Activated CD4-positive, alpha-beta T cell treated with anti-CD3 and anti-CD28 coated beads, Interleukin-2, amount 10 ng/mL, durations not matched to agents 7 days and 5 days (primary cell): ENCODE measurements at regions of chr2 and their contacts with region 1.

Region 1: GRCh38 chr2:120245354-120245791 is 7.3 kb upstream of the RALB start:
- DNase-seq: no peak
- H3K4me3 Mint-ChIP-seq: no peak overlapping the region
- H3K27ac Mint-ChIP-seq: no peak overlapping the region
- H3K4me1 Mint-ChIP-seq: peaks cover 25% of the 10 kb centered on the region
- H3K27me3 Mint-ChIP-seq: peaks cover 21% of the 10 kb centered on the region

Region 2: DNA sequence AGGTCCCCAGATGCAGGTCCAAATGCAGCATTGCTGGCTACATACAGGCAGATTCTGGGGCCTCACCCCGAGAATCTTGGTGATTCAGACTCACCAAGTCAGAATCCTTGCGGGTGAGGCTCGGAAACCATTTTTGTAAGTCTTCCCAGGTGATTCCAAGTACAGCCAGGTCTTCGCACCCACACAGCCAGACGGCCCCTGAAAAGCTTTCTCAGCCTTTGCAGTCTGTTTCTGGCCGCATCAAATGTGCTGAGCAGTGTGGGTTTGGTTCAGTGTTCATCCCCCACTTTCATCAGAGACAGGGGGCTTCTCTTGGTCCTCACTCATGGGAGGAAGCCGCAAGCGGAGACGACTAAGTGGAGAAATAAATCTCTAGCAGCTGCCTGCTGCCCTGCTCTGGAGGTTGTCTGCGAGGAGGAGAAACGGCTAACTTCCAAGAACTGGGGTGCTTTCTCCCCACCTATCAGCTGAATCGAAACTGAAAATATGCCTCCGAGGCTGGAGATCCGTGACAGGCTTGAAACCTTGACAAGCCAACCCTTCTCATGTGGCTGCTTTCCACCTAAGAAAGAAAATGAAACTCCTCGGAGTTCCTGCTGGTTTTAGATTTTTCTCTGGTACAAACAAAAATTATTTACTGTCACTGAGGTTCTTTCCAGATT is 13.3 kb before region 1 on chr2:
- CTCF ChIA-PET with region 1: interaction called, 51 read pairs
- POLR2A ChIA-PET with region 1: interaction called, 5 read pairs
- DNase-seq: peak; percentile 90
- H3K4me3 Mint-ChIP-seq: peak overlapping the region; percentile 96
- H3K27ac Mint-ChIP-seq: peak overlapping the region; percentile 99
- H3K4me1 Mint-ChIP-seq: peaks cover 53% of the 10 kb centered on the region
- H3K27me3 Mint-ChIP-seq: no peaks in the 10 kb centered on the region

Region 3: GRCh38 chr2:120305296-120305695 is 59.9 kb after region 1 on chr2:
- CTCF ChIA-PET with region 1: no interaction called
- POLR2A ChIA-PET with region 1: no interaction called
- DNase-seq: no peak
- H3K4me3 Mint-ChIP-seq: no peak overlapping the region
- H3K27ac Mint-ChIP-seq: no peak overlapping the region
- H3K4me1 Mint-ChIP-seq: peaks cover 20% of the 10 kb centered on the region
- H3K27me3 Mint-ChIP-seq: no peaks in the 10 kb centered on the region